BJ (cell line): ENCODE measurements at regions of chr16 and their contacts with region 1.

Region 1: DNA sequence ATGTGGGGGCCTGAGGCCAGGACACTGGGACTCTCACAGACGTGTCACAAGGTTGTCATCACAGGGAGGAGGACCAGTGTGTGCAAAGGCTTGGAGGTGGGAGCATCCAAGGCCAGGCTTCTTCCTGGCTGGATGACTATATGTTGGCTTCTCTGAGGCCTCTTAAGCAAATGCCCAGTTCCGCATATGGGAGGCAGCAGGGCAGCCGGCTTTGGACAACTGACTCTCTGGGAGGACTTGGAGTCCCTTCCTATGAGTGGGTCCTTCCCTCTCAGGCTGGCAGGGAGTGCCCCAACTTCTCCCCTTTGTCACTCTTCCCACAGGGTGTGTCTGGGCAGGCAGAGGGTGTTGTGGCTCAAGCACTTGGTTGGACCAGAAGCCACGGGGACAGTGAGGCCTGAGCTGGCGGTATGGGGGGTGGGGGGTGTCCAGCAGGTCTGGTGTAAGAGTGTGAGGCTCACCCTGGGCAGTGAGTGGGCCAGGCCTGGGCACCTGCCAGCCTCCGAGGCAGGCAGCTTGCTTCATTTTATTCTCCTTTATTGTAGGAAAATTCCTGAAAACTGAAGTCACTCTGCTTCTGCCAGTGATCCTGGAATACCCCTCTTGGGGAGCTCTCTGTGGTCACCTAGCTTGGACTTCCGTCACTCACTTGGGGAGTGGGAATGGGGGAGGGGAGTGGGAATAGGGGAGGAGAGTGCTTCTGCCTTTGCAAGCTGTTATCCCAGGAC is 14.9 kb downstream of the ADGRG1 start:
- DNase-seq: peak; percentile 29
- H3K4me3 ChIP-seq: no peak overlapping the region
- H3K27me3 ChIP-seq: no peaks in the 10 kb centered on the region
- CTCF ChIP-seq: no peak

Region 2: GRCh38 chr16:57591086-57591869 is 52.0 kb before region 1 on chr16:
- CTCF ChIA-PET with region 1: interaction called, 81 read pairs
- POLR2A ChIA-PET with region 1: no interaction called
- DNase-seq: peak; percentile 17
- H3K4me3 ChIP-seq: no peak overlapping the region
- H3K27me3 ChIP-seq: peaks cover 5% of the 10 kb centered on the region
- CTCF ChIP-seq: peak; percentile 91

Region 3: DNA sequence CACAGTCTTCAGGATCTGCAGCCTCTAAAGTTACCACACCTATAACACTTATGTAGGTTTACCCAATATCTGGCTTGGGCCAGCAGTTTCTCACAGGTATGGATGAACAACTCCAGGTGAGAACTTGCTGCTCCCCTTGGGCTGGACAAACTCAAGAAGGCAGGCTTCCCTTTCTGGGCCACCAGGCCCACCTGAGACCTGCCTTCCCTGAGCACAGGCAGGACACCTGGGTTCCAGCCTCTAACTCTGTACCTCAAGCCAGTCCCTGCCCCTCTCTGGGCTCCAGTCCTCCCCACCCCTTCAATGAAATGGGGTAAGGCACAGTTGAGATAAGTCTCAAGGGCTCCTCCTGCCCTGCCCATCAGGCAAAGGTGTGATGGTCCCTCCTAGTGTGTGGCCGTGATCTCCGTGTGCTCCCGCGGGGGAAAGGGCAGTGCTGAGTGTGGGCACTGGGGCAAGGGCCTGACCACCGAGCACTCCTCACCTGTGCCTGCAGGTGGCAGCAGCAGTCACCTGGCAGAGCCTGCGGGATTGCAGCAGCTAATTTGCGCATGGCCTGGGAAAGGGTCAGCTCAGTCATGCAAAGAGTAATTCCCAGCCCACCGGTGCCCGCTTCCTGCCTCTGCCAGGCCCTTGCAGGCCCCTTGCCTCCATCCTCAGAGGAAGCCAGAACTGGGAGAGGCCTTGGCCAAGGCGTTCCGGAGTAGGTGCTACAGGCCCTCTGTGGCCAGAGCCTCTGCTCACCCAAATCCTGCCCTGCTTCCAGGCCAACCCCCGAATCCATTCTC is 43.1 kb before region 1 on chr16:
- CTCF ChIA-PET with region 1: interaction called, 81 read pairs
- POLR2A ChIA-PET with region 1: no interaction called
- DNase-seq: no peak
- H3K4me3 ChIP-seq: no peak overlapping the region
- H3K27me3 ChIP-seq: peaks cover 7% of the 10 kb centered on the region
- CTCF ChIP-seq: peak; percentile 76

Region 4: GRCh38 chr16:57741660-57742191 is 98.4 kb after region 1 on chr16:
- CTCF ChIA-PET with region 1: no interaction called
- POLR2A ChIA-PET with region 1: no interaction called
- DNase-seq: no peak
- H3K4me3 ChIP-seq: no peak overlapping the region
- H3K27me3 ChIP-seq: no peaks in the 10 kb centered on the region
- CTCF ChIP-seq: no peak